Natural killer cell (primary cell): ENCODE measurements at regions of chr1 and their contacts with region 1.

Region 1: DNA sequence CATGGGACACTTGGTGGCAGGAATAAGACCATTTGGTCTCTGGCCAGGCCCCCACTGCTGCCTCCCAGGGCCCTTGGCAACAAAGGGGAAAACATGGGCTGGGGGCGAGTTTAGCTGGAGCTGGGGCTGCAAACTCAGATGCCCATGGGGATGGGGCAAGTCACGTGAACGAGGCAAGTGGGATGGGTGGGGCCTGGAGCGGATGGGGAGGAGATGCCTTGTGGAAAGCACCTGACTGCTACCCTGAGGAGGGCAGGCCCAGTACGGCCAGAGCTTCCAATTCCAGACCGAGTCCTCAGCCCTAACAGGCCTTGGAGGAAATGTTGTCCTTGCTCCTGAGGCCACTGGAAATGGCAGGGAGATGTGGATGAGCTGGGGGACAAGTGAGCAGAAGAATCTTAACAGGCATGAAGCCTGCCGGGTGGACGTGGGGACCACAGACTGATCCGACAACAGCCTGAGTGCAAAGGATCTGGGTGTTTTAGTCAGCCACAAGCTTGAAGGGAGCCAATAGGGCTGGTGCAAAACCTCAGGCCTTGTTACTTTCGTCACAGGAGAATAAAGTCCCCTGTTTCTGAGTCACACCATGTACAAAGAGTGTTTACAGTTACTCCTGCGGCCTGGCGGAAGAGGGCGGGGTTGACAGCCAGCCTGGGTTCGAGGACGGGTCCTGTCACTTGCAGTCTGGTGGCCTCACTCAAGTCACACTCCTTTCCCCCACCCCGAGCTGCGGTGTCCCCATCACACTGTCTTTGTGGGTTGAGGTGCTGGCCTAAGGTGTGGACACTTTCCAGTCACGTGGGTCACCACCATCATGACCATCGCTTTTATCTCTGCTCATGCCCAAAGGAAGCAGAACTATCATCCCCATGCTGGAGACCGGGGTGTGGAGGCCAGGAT is 19.1 kb downstream of the RUNX3 start:
- DNase-seq: peak; percentile 94 to 95
- ATAC-seq: peak; percentile 64 to 84 (median 70)
- H3K4me3 ChIP-seq: peak overlapping the region; percentile 25
- H3K4me3 Mint-ChIP-seq: peak overlapping the region; percentile 83
- H3K27ac ChIP-seq: peak overlapping the region; percentile 100
- H3K27ac Mint-ChIP-seq: peak overlapping the region; percentile 99
- H3K4me1 ChIP-seq: peaks cover 99% of the 10 kb centered on the region
- H3K4me1 Mint-ChIP-seq: peaks cover 89 to 94% of the 10 kb centered on the region in 2 donors
- H3K27me3 ChIP-seq: no peaks in the 10 kb centered on the region
- H3K27me3 Mint-ChIP-seq: no peaks in the 10 kb centered on the region
- CTCF ChIP-seq: no peak

Region 2: DNA sequence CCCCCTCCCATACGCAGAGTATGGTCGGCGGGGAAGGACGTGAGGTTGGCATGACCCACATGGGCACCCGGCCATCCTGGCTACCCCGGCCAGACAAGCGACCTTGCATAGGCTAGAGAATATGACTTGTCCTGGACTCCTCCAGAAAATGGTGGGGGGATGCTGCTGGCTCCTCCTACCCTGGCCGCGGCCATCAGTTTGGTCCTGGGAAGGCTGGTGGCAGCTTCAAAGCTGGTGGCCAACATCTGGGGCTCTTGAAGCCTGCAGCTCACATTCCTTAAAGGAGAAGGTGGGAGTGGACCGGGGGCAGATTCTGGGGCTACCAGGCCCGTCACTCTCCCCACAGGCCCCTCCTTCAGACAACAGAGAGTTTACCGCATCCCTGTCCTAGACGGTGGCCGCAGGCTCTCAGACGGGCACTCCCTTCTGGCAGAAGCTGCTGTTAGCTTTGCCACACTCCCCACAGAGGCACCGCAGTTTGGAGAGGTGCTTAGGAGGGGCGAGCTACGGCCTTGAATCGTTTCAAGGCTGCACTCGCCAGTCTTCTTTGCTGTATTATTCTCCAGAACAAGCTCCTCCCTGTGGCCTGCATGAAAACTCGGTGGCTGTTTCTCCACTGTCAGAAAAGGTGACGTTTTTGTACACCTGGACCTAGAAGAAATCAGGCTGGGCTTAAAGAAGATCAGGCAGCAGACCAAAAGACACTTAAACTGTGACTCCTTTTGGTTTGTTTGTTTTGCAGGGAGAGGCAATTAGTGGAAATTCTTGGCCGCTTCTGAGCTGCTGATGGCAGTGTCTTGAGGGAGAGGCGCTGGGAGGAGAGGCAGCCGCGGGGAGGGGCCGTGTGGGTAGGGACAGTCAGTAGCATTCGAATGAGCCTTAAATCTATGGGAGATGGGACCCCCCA is 48.9 kb before region 1 on chr1:
- intact Hi-C with region 1: loop called (anchors 2 kb)
- DNase-seq: no peak
- ATAC-seq: peak; percentile 21 to 68 (median 43)
- H3K4me3 ChIP-seq: no peak overlapping the region
- H3K4me3 Mint-ChIP-seq: peak overlapping the region; percentile 82
- H3K27ac ChIP-seq: peak overlapping the region; percentile 63
- H3K27ac Mint-ChIP-seq: peak overlapping the region; percentile 81 to 86
- H3K4me1 ChIP-seq: peaks cover 80% of the 10 kb centered on the region
- H3K4me1 Mint-ChIP-seq: peaks cover 66 to 69% of the 10 kb centered on the region in 2 donors
- H3K27me3 ChIP-seq: no peaks in the 10 kb centered on the region
- H3K27me3 Mint-ChIP-seq: no peaks in the 10 kb centered on the region
- CTCF ChIP-seq: no peak

Region 3: GRCh38 chr1:24955161-24955560 is 44.2 kb after region 1 on chr1:
- intact Hi-C with region 1: loop called (anchors 1 kb)
- DNase-seq: peak in 1 of 2 donors; percentile 79
- ATAC-seq: peak; percentile 66 to 82 (median 79)
- H3K4me3 ChIP-seq: no peak overlapping the region
- H3K4me3 Mint-ChIP-seq: peak overlapping the region; percentile 26
- H3K27ac ChIP-seq: peak overlapping the region; percentile 26
- H3K27ac Mint-ChIP-seq: peak overlapping the region; percentile 60 to 68
- H3K4me1 ChIP-seq: peaks cover 83% of the 10 kb centered on the region
- H3K4me1 Mint-ChIP-seq: peaks cover 36 to 59% of the 10 kb centered on the region in 2 donors
- H3K27me3 ChIP-seq: no peaks in the 10 kb centered on the region
- H3K27me3 Mint-ChIP-seq: peaks cover 13 to 17% of the 10 kb centered on the region in 2 donors
- CTCF ChIP-seq: no peak

Region 4: GRCh38 chr1:25037174-25038074 is 126.4 kb after region 1 on chr1:
- intact Hi-C with region 1: loop called (anchors 2 kb)
- DNase-seq: peak in 1 of 2 donors; percentile 83
- ATAC-seq: no peak
- H3K4me3 ChIP-seq: no peak overlapping the region
- H3K4me3 Mint-ChIP-seq: no peak overlapping the region
- H3K27ac ChIP-seq: no peak overlapping the region
- H3K27ac Mint-ChIP-seq: peak overlapping the region in 1 of 2 donors; percentile 25
- H3K4me1 ChIP-seq: peaks cover 81% of the 10 kb centered on the region
- H3K4me1 Mint-ChIP-seq: peaks cover 38 to 45% of the 10 kb centered on the region in 2 donors
- H3K27me3 ChIP-seq: no peaks in the 10 kb centered on the region
- H3K27me3 Mint-ChIP-seq: peaks cover 14 to 17% of the 10 kb centered on the region in 2 donors
- CTCF ChIP-seq: peak; percentile 32

Region 5: GRCh38 chr1:25099343-25099951 is 188.4 kb after region 1 on chr1:
- intact Hi-C with region 1: loop called (anchors 1 kb)
- DNase-seq: peak; percentile 64 to 71
- ATAC-seq: peak; percentile 60 to 77 (median 74)
- H3K4me3 ChIP-seq: peak overlapping the region; percentile 2
- H3K4me3 Mint-ChIP-seq: peak overlapping the region; percentile 78
- H3K27ac ChIP-seq: peak overlapping the region; percentile 54
- H3K27ac Mint-ChIP-seq: peak overlapping the region; percentile 75 to 84
- H3K4me1 ChIP-seq: peaks cover 77% of the 10 kb centered on the region
- H3K4me1 Mint-ChIP-seq: peaks cover 65 to 74% of the 10 kb centered on the region in 2 donors
- H3K27me3 ChIP-seq: no peaks in the 10 kb centered on the region
- H3K27me3 Mint-ChIP-seq: peaks cover 30 to 44% of the 10 kb centered on the region in 2 donors
- CTCF ChIP-seq: no peak